Ovary (tissue), 10 donors: ENCODE measurements at regions of chr17 and their contacts with region 1.

Region 1: GRCh38 chr17:77247048-77247541 is 106.3 kb downstream of the SEC14L1 start:
- DNase-seq: peak; percentile 78 to 91 (median 88)
- H3K4me3 ChIP-seq: peak overlapping the region; percentile 38
- H3K27ac ChIP-seq: no peak overlapping the region
- H3K4me1 ChIP-seq: peaks cover 10% of the 10 kb centered on the region
- H3K27me3 ChIP-seq: no peaks in the 10 kb centered on the region
- CTCF ChIP-seq: peak; percentile 89 to 99 (median 97)
- EP300 ChIP-seq: no peak
- POLR2A ChIP-seq: no peak

Region 2: GRCh38 chr17:77088455-77089123 is 158.5 kb before region 1 on chr17:
- intact Hi-C with region 1: loop called (anchors 2 to 5 kb)
- DNase-seq: peak; percentile 92 to 95 (median 94)
- H3K4me3 ChIP-seq: peak overlapping the region; percentile 75
- H3K27ac ChIP-seq: peak overlapping the region; percentile 66 to 75
- H3K4me1 ChIP-seq: peaks cover 3% of the 10 kb centered on the region
- H3K27me3 ChIP-seq: no peaks in the 10 kb centered on the region
- CTCF ChIP-seq: peak; percentile 87 to 95 (median 95)
- EP300 ChIP-seq: peak; percentile 7
- POLR2A ChIP-seq: peak; percentile 65